Heart right ventricle (tissue), 16 donors: ENCODE measurements at regions of chr18 and their contacts with region 1.

Region 1: GRCh38 chr18:7812431-7813063 is 245.4 kb downstream of the PTPRM start:
- DNase-seq: no peak
- ATAC-seq: peak; percentile 30 to 77 (median 66)
- H3K4me3 ChIP-seq: no peak overlapping the region
- H3K27ac ChIP-seq: peak overlapping the region in 6 of 10 donors; percentile 17 to 71 (median 29)
- H3K4me1 ChIP-seq: peaks cover 3 to 71% (median 58%) of the 10 kb centered on the region in 9 donors
- H3K27me3 ChIP-seq: no peaks in the 10 kb centered on the region
- CTCF ChIP-seq: no peak

Region 2: DNA sequence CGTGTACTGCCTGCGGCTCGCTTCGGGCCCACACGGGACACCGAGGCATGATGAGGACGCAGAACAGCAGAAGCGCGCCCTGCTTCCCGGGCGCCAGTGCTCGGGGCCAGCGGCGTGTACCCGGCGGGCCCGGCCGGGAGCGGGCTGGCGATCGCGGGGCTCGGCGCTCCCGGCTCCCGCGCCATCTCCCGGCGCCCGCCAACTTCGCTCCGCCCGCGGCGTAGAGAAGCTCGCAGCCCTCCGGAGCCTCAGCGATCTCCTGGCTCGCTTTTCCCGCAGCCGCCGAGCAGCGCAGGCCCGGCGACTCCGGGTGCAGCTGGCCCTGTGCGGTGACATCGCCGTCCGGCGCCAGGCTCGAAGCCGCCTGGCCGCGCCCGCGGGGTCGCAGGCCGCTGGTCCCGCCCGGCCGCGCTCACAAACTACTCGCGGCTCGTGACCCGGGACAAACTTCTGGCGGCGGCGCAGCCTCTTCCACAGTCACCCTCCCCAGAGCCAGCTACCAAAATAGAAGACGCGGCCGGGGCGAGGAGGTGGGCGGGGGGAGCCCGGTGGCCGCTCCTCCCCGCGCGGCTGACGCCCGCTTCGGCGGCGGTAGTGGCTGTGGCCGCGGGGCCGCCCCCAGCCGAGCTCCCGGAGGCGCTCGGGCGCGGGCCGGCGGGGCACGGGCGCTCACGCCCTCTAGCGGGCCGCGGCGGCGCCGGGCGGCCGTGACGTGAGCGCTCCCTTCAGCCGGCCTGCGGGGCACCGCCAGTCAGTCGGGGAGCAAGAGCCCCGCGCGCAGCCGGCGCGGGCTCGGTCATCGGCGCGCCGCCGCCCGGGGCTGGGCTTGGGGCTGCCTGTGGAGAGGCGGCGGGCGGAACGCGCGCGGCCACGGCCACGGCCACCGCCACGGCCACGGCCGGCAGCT is 245.7 kb before region 1 on chr18 and contains the start of gene PTPRM:
- intact Hi-C with region 1: no loop called
- DNase-seq: peak; percentile 93 to 94
- ATAC-seq: peak; percentile 88 to 94 (median 92)
- H3K4me3 ChIP-seq: peak within 1 kb of the TSS; percentile 76 to 95 (median 88)
- H3K27ac ChIP-seq: peak within 1 kb of the TSS; percentile 95 to 100 (median 98)
- H3K4me1 ChIP-seq: peaks cover 0 to 64% (median 34%) of the 10 kb centered on the region in 9 donors
- H3K27me3 ChIP-seq: peaks cover 0 to 60% (median 0%) of the 10 kb centered on the region in 7 donors
- CTCF ChIP-seq: peak in 8 of 9 donors; percentile 12 to 79 (median 42)
- total RNA-seq, gene PTPRM: 104 to 170 (median 145) TPM

Region 3: GRCh38 chr18:7755753-7756475 is 56.6 kb before region 1 on chr18:
- intact Hi-C with region 1: loop called in 1 of 10 experiments (anchors 10 kb)
- DNase-seq: no peak
- ATAC-seq: peak in 7 of 8 donors; percentile 41 to 77 (median 63)
- H3K4me3 ChIP-seq: no peak overlapping the region
- H3K27ac ChIP-seq: peak overlapping the region in 5 of 10 donors; percentile 29 to 59 (median 51)
- H3K4me1 ChIP-seq: peaks cover 8 to 86% (median 72%) of the 10 kb centered on the region in 9 donors
- H3K27me3 ChIP-seq: no peaks in the 10 kb centered on the region
- CTCF ChIP-seq: peak; percentile 19 to 60 (median 44)

Region 4: DNA sequence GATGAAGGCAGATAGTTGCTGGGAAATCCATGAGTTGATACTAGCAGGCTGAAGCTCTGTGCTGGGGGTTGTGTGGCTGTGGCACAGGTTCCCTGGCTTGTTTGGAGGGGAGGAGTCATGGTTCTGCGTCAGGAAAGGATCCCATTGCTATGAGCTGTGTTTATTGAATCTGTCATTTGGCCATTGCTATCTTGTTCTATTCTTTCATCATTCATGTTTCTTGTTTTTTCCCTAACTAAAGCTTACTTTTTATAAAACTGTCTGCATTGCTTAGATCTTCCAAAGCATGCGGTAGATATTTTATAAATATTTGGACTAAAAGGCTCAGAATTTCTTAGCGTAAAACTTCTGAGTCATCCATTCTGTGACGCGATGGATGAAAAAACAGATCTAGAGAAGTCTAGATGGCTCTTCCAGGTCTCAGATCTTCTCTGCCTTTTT is 89.9 kb after region 1 on chr18:
- intact Hi-C with region 1: no loop called
- DNase-seq: no peak
- ATAC-seq: peak; percentile 31 to 93 (median 75)
- H3K4me3 ChIP-seq: no peak overlapping the region
- H3K27ac ChIP-seq: no peak overlapping the region
- H3K4me1 ChIP-seq: peaks cover 0 to 50% (median 31%) of the 10 kb centered on the region in 9 donors
- H3K27me3 ChIP-seq: no peaks in the 10 kb centered on the region
- CTCF ChIP-seq: no peak

Region 5: DNA sequence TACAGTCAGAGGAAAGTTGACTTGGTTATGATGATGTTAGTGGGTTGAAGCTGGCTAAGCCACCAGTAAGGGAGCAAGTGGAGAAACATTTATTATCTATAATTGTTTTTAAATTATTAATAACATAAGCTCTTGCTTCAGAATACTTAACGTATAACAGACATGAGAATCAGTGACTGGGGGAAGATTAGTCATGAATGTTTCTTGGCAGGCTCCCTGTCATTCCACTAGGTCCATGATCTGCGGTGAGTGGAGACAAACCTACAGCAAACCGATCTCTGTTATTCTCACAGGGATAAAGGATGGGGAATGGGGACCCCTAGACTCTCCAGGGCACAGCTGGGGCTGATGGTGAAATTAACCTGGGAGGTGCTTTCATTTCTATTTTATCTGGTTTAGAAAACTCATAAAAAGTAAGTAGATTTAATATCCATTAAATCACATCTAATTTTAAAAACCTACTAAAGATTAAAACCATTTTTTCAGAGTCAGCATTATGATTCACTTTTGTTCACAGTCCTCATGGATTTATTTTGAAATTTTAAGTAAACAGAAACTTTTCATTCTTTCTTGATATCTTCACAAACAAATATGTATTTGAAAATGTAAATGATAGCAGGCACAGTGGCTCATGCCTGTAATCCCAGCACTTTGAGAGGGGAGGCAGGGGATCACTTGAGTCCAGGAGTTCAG is 174.9 kb after region 1 on chr18:
- intact Hi-C with region 1: no loop called
- DNase-seq: no peak
- ATAC-seq: peak in 5 of 8 donors; percentile 39 to 71 (median 47)
- H3K4me3 ChIP-seq: no peak overlapping the region
- H3K27ac ChIP-seq: peak overlapping the region in 1 of 10 donors; percentile 10
- H3K4me1 ChIP-seq: peaks cover 0 to 29% (median 12%) of the 10 kb centered on the region in 9 donors
- H3K27me3 ChIP-seq: no peaks in the 10 kb centered on the region
- CTCF ChIP-seq: no peak